ENCODE measurements at regions of chr10 and their contacts with region 1.

Region 1: GRCh38 chr10:80699602-80700039 is 161.9 kb downstream of the SH2D4B start:
- DNase-seq: peak; percentile 48
- ATAC-seq: peak; percentile 70
- H3K4me3 Mint-ChIP-seq: no peak overlapping the region
- H3K27ac Mint-ChIP-seq: no peak overlapping the region
- H3K4me1 Mint-ChIP-seq: no peaks in the 10 kb centered on the region
- H3K27me3 Mint-ChIP-seq: peaks cover 5% of the 10 kb centered on the region
- CTCF ChIP-seq: no peak

Region 2: GRCh38 chr10:80444646-80445319 is 254.8 kb before region 1 on chr10:
- CTCF ChIA-PET with region 1: no interaction called
- POLR2A ChIA-PET with region 1: no interaction called
- intact Hi-C with region 1: loop called (anchors 10 kb)
- DNase-seq: no peak
- ATAC-seq: peak; percentile 89
- H3K4me3 Mint-ChIP-seq: no peak overlapping the region
- H3K27ac Mint-ChIP-seq: peak overlapping the region; percentile 24
- H3K4me1 Mint-ChIP-seq: peaks cover 7% of the 10 kb centered on the region
- H3K27me3 Mint-ChIP-seq: no peaks in the 10 kb centered on the region
- CTCF ChIP-seq: no peak

Region 3: DNA sequence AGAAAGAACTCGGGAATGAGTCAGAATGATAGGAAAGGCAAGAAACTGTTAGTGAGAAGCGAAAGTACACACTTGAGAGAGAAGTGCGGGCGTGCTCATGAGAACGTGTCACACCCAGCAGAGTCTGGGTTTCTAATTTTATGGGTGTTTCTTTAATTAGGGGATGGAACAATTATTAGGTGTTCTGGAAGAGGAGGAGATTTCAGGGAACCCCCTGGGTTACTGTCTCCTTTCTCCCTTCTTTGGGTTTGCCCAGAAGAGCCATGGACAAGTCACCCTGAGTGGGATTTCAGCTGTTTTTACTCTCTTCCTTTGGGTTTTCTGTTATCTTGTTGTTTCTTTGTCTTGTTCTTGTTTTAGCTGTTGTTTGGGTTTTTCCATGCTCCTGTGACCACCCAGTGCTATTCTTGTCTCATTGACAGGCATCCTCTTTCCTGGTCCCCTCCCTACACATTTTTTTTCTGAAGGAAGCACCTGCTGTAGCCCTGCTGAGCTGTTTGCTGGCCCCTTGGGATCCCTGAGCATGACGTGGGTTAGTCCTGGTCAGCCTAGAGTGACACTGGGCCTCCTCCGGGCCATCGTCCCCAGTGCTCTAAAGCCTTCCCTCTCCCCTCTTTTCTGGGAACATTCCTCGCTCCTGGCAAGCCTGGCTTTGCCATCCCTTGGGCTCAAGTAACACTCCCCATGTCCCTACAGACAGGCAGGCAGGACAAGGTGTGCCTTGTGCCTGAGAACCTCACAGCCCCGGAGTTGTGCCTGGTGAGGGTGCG is 158.5 kb before region 1 on chr10:
- CTCF ChIA-PET with region 1: interaction called, 3 read pairs
- POLR2A ChIA-PET with region 1: no interaction called
- intact Hi-C with region 1: loop called (anchors 2 kb)
- DNase-seq: no peak
- ATAC-seq: peak; percentile 59
- H3K4me3 Mint-ChIP-seq: peak overlapping the region; percentile 76
- H3K27ac Mint-ChIP-seq: peak overlapping the region; percentile 87
- H3K4me1 Mint-ChIP-seq: peaks cover 46% of the 10 kb centered on the region
- H3K27me3 Mint-ChIP-seq: no peaks in the 10 kb centered on the region
- CTCF ChIP-seq: no peak

Region 4: GRCh38 chr10:81018708-81019365 is 319.2 kb after region 1 on chr10:
- CTCF ChIA-PET with region 1: interaction called, 3 read pairs
- POLR2A ChIA-PET with region 1: no interaction called
- intact Hi-C with region 1: loop called (anchors 2 kb)
- DNase-seq: no peak
- ATAC-seq: peak; percentile 25
- H3K4me3 Mint-ChIP-seq: no peak overlapping the region
- H3K27ac Mint-ChIP-seq: no peak overlapping the region
- H3K4me1 Mint-ChIP-seq: no peaks in the 10 kb centered on the region
- H3K27me3 Mint-ChIP-seq: peaks cover 2% of the 10 kb centered on the region
- CTCF ChIP-seq: no peak

Measured in activated B cell treated with CpG ODN at 0.5 μM for 24 hours (primary cell).